ENCODE measurements at regions of chr4 and their contacts with region 1.

Region 1: DNA sequence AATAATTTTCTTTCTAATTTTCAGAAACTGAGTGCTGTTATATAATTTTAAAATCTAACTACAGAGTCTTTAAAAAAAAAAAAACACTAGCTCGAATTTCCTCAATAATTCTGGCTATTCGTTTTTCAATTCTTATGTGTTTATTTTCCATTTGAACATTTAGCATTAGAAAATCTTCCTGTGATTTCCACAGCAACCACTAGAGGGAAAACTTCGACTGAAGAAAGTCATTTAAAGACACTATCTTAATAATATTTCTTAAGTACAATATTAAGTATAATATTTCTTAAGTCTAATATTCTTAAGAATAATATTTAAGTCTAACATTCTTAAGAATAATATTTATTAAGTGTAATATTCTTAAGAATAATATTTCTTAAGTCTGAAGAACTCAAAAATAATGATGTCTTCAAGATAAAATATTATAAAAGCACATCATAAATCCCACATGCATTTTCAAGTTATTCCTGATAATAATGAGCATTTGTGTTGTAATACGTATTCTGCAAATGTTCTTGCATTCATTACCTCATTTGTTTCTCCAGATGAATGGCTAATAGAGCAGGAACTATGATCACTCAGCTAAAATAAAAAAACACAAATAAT is 118.4 kb upstream of the WDR17 start:
- DNase-seq: no peak
- ATAC-seq: no peak
- H3K4me3 Mint-ChIP-seq: no peak overlapping the region
- H3K27ac Mint-ChIP-seq: no peak overlapping the region
- H3K4me1 Mint-ChIP-seq: peaks cover 6% of the 10 kb centered on the region
- H3K27me3 Mint-ChIP-seq: no peaks in the 10 kb centered on the region
- CTCF ChIP-seq: peak; percentile 18

Region 2: GRCh38 chr4:175622887-175623286 is 324.3 kb before region 1 on chr4:
- CTCF ChIA-PET with region 1: no interaction called
- POLR2A ChIA-PET with region 1: no interaction called
- intact Hi-C with region 1: no loop called
- DNase-seq: no peak
- ATAC-seq: no peak
- H3K4me3 Mint-ChIP-seq: no peak overlapping the region
- H3K27ac Mint-ChIP-seq: no peak overlapping the region
- H3K4me1 Mint-ChIP-seq: no peaks in the 10 kb centered on the region
- H3K27me3 Mint-ChIP-seq: no peaks in the 10 kb centered on the region
- CTCF ChIP-seq: no peak

Region 3: DNA sequence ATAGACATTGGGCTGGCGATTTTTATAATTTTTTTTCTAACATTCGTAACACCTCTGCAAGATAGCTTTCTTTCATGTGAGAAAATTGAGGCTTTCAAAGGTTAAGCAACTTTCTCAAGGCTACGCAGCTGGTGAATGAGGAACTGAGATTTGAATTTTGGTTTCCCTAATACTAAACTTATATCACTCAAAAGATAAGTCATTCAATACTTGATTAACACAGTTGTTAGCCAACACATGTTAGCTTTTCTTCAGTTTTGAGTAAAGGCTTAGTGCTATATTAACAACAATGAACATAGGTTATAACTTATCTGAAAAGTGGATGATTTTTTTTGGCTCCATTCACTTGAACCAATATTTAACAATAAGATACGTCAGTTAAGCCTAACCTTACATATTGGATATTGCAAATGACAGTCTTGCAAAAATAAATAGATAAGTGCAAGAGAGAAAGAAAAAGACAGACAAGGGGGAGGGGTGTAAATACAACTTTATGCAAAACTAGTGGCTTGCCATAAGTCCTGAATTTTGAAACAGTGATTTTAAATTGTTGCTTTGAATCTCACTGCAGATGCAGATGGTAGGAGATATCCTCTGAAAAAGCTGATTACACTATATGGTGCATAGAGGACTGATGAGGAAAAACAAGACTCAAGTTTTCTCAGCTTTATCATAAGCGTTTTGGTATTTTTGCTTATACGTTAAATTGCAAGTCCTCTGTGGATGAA is 124.0 kb before region 1 on chr4:
- CTCF ChIA-PET with region 1: no interaction called
- POLR2A ChIA-PET with region 1: no interaction called
- intact Hi-C with region 1: no loop called
- DNase-seq: no peak
- ATAC-seq: peak; percentile 25
- H3K4me3 Mint-ChIP-seq: no peak overlapping the region
- H3K27ac Mint-ChIP-seq: no peak overlapping the region
- H3K4me1 Mint-ChIP-seq: peaks cover 7% of the 10 kb centered on the region
- H3K27me3 Mint-ChIP-seq: no peaks in the 10 kb centered on the region
- CTCF ChIP-seq: no peak

Region 4: DNA sequence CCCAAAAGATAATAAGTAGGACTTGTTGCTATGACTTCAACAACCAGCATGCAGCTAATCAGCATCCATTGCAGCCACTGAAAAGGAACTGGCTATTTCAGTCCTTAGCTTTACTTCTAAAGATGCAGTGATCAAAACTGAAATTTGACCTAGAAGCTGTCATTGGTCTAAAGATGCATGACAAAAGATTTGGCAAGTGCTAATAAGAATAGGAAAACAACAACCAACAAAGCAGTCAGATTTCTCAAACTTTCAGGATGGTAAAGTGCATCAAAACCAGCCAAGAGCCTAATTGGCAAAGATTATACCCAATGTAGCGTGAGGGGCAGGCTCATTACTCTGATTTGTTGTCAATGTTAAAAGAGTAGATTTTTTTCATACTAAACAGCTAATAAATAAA is 41.3 kb after region 1 on chr4:
- CTCF ChIA-PET with region 1: no interaction called
- POLR2A ChIA-PET with region 1: no interaction called
- intact Hi-C with region 1: no loop called
- DNase-seq: no peak
- ATAC-seq: no peak
- H3K4me3 Mint-ChIP-seq: no peak overlapping the region
- H3K27ac Mint-ChIP-seq: no peak overlapping the region
- H3K4me1 Mint-ChIP-seq: no peaks in the 10 kb centered on the region
- H3K27me3 Mint-ChIP-seq: peaks cover 2% of the 10 kb centered on the region
- CTCF ChIP-seq: no peak

Region 5: DNA sequence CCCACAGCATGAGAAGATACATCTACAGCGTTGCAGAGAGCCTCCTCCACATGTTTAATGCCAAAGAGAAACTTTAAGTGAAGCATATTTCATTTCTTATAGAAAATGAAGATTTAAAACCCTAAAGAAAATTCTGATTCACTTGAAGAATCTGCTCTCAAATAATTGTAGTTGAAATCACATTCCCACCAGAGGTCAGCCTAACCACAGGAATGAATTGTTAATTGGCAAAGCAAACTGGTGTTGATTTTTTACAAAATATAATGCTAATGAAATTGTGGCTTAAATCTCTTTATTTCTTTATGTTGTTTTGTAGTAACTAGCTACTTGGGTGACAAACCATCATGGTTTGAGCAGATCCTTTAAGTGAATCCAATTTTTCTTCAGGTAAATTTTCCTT is 87.3 kb after region 1 on chr4:
- CTCF ChIA-PET with region 1: no interaction called
- POLR2A ChIA-PET with region 1: no interaction called
- intact Hi-C with region 1: loop called (anchors 1 kb)
- DNase-seq: no peak
- ATAC-seq: no peak
- H3K4me3 Mint-ChIP-seq: no peak overlapping the region
- H3K27ac Mint-ChIP-seq: no peak overlapping the region
- H3K4me1 Mint-ChIP-seq: peaks cover 4% of the 10 kb centered on the region
- H3K27me3 Mint-ChIP-seq: no peaks in the 10 kb centered on the region
- CTCF ChIP-seq: no peak

Region 6: GRCh38 chr4:176217510-176217909 is 270.3 kb after region 1 on chr4:
- CTCF ChIA-PET with region 1: no interaction called
- POLR2A ChIA-PET with region 1: no interaction called
- intact Hi-C with region 1: loop called (anchors 5 kb)
- DNase-seq: no peak
- ATAC-seq: no peak
- H3K4me3 Mint-ChIP-seq: no peak overlapping the region
- H3K27ac Mint-ChIP-seq: no peak overlapping the region
- H3K4me1 Mint-ChIP-seq: no peaks in the 10 kb centered on the region
- H3K27me3 Mint-ChIP-seq: peaks cover 4% of the 10 kb centered on the region
- CTCF ChIP-seq: no peak

Region 7: DNA sequence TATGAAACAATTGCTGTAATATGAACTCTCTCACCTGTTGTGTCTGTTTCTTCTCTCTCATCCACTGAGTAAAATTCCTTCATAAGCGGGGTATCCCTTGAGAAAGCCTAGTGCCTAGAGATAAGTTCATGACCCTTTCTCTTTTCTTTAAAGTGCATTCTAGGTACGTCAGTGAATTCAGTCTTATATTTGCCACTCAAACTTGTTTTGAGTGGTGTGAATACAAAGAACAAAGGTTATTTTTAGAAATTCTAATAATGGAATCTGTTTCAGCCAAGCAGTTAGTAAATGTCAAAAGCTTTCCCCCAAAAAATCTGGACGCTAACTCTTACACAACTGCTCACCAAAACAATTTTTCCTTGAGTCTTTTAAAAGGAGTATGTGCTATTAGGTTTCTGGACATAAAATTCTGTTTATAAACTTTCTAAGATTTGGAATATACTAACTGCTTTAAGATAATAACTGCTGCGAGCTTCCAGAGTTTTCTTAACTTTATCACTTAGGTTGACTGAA is 733.5 kb after region 1 on chr4:
- CTCF ChIA-PET with region 1: no interaction called
- POLR2A ChIA-PET with region 1: no interaction called
- intact Hi-C with region 1: no loop called
- DNase-seq: no peak
- ATAC-seq: no peak
- H3K4me3 Mint-ChIP-seq: no peak overlapping the region
- H3K27ac Mint-ChIP-seq: no peak overlapping the region
- H3K4me1 Mint-ChIP-seq: no peaks in the 10 kb centered on the region
- H3K27me3 Mint-ChIP-seq: no peaks in the 10 kb centered on the region
- CTCF ChIP-seq: no peak

Measured in activated B cell treated with CpG ODN at 0.5 μM for 24 hours (primary cell).